CD4-positive, alpha-beta memory T cell (primary cell): ENCODE measurements at regions of chr17 and their contacts with region 1.

Region 1: DNA sequence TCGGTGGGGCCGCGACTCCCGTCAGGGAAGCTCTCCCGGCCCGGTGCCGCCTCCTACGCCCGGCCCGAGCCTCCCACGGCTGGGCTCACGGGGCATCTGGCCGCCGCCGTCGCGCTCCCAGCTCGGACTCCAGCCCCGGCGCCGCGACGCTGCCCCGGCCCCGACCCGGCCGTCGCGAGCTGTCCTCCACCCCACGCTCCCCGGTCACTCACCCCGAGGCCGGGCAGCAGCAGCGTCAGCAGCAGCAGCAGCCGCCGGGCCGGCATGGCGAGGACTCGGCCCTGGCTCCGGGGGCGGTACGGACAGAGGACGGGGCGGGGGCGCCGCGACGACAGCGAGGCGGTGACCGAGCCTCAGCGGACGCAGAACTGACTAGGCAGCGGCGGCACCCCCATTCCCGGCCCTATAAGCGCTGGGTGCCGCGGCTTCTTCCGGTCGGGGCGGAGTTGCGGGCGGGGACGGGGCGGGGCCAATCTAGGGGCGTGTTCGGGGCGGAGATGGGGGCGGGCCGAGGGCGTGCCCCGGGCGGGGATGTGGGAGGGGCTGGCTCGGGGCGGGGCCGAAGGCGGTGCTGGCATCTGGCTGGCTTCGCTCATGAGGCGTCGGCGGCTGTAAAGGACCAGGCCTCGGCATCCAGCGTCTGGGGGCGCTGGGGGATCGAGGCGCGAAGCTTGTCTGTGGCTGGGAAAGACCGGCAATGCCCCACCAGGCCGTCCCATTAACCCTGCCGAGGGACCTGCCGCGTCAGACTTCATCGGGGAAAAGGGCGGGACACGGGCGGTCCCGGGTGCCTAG is at the start of gene ERN1:
- DNase-seq: peak; percentile 90 to 92 (median 90)
- H3K4me3 ChIP-seq: peak within 1 kb of the TSS; percentile 76 to 86
- H3K4me3 Mint-ChIP-seq: peak within 1 kb of the TSS; percentile 95 to 99 (median 98)
- H3K27ac ChIP-seq: peak within 1 kb of the TSS; percentile 86
- H3K27ac Mint-ChIP-seq: peak within 1 kb of the TSS; percentile 96 to 99 (median 98)
- H3K4me1 ChIP-seq: peaks cover 56% of the 10 kb centered on the region
- H3K4me1 Mint-ChIP-seq: peaks cover 33 to 61% (median 45%) of the 10 kb centered on the region in 4 donors
- H3K27me3 ChIP-seq: no peaks in the 10 kb centered on the region
- H3K27me3 Mint-ChIP-seq: no peaks in the 10 kb centered on the region
- total RNA-seq, gene ERN1: 163 to 172 TPM

Region 2: DNA sequence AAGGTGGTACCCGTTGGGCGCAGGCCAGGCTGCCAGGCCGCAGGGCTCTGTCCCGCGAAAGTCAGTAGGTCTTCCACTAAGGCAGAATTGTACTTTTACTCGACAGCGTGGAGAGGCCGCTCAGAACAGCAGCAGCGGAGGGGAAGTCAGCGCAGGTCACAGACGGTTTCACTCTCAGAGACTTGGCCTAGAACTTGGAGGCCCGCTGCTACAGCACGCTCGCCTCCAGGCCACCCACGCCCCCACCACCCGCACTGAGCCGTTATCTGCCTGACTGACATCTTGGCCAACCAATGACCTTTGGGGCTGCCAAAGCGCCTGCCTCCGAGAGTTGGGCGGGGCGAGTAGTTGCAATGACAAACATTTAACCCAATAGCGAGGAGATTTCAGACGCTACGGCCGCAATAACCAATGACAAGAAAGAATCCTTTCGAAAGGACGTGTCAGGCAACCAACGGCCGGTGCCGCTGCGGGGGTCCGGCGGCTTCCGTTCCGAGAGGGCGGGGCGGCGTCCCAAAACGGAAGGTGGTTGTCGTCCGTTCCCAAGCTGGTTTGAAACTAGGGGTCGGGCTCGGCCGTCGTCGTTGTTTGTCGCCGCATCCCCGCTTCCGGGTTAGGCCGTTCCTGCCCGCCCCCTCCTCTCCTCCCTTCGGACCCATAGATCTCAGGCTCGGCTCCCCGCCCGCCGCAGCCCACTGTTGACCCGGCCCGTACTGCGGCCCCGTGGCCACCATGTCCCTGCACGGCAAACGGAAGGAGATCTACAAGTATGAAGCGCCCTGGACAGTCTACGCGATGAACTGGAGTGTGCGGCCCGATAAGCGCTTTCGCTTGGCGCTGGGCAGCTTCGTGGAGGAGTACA is 579.8 kb before region 1 on chr17 and contains the start of gene DCAF7:
- CTCF ChIA-PET with region 1: no interaction called
- POLR2A ChIA-PET with region 1: no interaction called
- intact Hi-C with region 1: no loop called
- DNase-seq: peak; percentile 99 to 100 (median 99)
- H3K4me3 ChIP-seq: peak within 1 kb of the TSS; percentile 90 to 91
- H3K4me3 Mint-ChIP-seq: peak within 1 kb of the TSS; percentile 92 to 99 (median 97)
- H3K27ac ChIP-seq: peak within 1 kb of the TSS; percentile 91
- H3K27ac Mint-ChIP-seq: peak within 1 kb of the TSS; percentile 90 to 98 (median 97)
- H3K4me1 ChIP-seq: peaks cover 41% of the 10 kb centered on the region
- H3K4me1 Mint-ChIP-seq: peaks cover 26 to 51% (median 36%) of the 10 kb centered on the region in 4 donors
- H3K27me3 ChIP-seq: no peaks in the 10 kb centered on the region
- H3K27me3 Mint-ChIP-seq: no peaks in the 10 kb centered on the region
- total RNA-seq, gene DCAF7: 88.1 to 93.0 TPM

Region 3: GRCh38 chr17:63919311-63919723 is 210.6 kb before region 1 on chr17:
- CTCF ChIA-PET with region 1: interaction called, 179 read pairs
- POLR2A ChIA-PET with region 1: interaction called, 15 read pairs
- intact Hi-C with region 1: loop called (anchors 1 kb)
- DNase-seq: peak; percentile 70 to 81 (median 75)
- H3K4me3 ChIP-seq: no peak overlapping the region
- H3K4me3 Mint-ChIP-seq: no peak overlapping the region
- H3K27ac ChIP-seq: no peak overlapping the region
- H3K27ac Mint-ChIP-seq: peak overlapping the region in 6 of 7 donors; percentile 38 to 87 (median 62)
- H3K4me1 ChIP-seq: peaks cover 7% of the 10 kb centered on the region
- H3K4me1 Mint-ChIP-seq: peaks cover 6% of the 10 kb centered on the region in 4 donors
- H3K27me3 ChIP-seq: no peaks in the 10 kb centered on the region
- H3K27me3 Mint-ChIP-seq: peaks cover 0 to 2% of the 10 kb centered on the region in 2 donors

Region 4: GRCh38 chr17:63998050-63998720 is 131.8 kb before region 1 on chr17 and contains the start of gene PRR29:
- CTCF ChIA-PET with region 1: interaction called, 13 read pairs
- POLR2A ChIA-PET with region 1: interaction called, 10 read pairs
- intact Hi-C with region 1: no loop called
- DNase-seq: peak; percentile 70 to 81 (median 75)
- H3K4me3 ChIP-seq: peak within 1 kb of the TSS; percentile 5 to 76
- H3K4me3 Mint-ChIP-seq: peak within 1 kb of the TSS; percentile 87 to 94 (median 88)
- H3K27ac ChIP-seq: peak within 1 kb of the TSS; percentile 39
- H3K27ac Mint-ChIP-seq: peak within 1 kb of the TSS; percentile 60 to 91 (median 87)
- H3K4me1 ChIP-seq: peaks cover 46% of the 10 kb centered on the region
- H3K4me1 Mint-ChIP-seq: peaks cover 32 to 69% (median 42%) of the 10 kb centered on the region in 4 donors
- H3K27me3 ChIP-seq: no peaks in the 10 kb centered on the region
- H3K27me3 Mint-ChIP-seq: no peaks in the 10 kb centered on the region
- total RNA-seq, gene PRR29: 0.19 to 1.0 TPM

Region 5: GRCh38 chr17:64041912-64042311 is 88.0 kb before region 1 on chr17:
- CTCF ChIA-PET with region 1: interaction called, 22 read pairs
- POLR2A ChIA-PET with region 1: interaction called, 18 read pairs
- intact Hi-C with region 1: no loop called
- DNase-seq: no peak
- H3K4me3 ChIP-seq: no peak overlapping the region
- H3K4me3 Mint-ChIP-seq: peak overlapping the region in 4 of 8 donors; percentile 7 to 50 (median 48)
- H3K27ac ChIP-seq: no peak overlapping the region
- H3K27ac Mint-ChIP-seq: peak overlapping the region in 6 of 7 donors; percentile 53 to 95 (median 80)
- H3K4me1 ChIP-seq: no peaks in the 10 kb centered on the region
- H3K4me1 Mint-ChIP-seq: peaks cover 10 to 50% (median 19%) of the 10 kb centered on the region in 4 donors
- H3K27me3 ChIP-seq: no peaks in the 10 kb centered on the region
- H3K27me3 Mint-ChIP-seq: no peaks in the 10 kb centered on the region

Region 6: GRCh38 chr17:64063766-64064224 is 66.2 kb before region 1 on chr17:
- CTCF ChIA-PET with region 1: interaction called, 153 read pairs
- POLR2A ChIA-PET with region 1: interaction called, 49 read pairs
- intact Hi-C with region 1: loop called (anchors 1 kb)
- DNase-seq: peak; percentile 39 to 74 (median 54)
- H3K4me3 ChIP-seq: no peak overlapping the region
- H3K4me3 Mint-ChIP-seq: peak overlapping the region; percentile 67 to 92 (median 88)
- H3K27ac ChIP-seq: peak overlapping the region; percentile 41
- H3K27ac Mint-ChIP-seq: peak overlapping the region; percentile 7 to 97 (median 92)
- H3K4me1 ChIP-seq: peaks cover 89% of the 10 kb centered on the region
- H3K4me1 Mint-ChIP-seq: peaks cover 48 to 100% (median 77%) of the 10 kb centered on the region in 4 donors
- H3K27me3 ChIP-seq: no peaks in the 10 kb centered on the region
- H3K27me3 Mint-ChIP-seq: no peaks in the 10 kb centered on the region

Region 7: GRCh38 chr17:64117981-64118979 is 11.7 kb before region 1 on chr17:
- CTCF ChIA-PET with region 1: interaction called, 30 read pairs
- POLR2A ChIA-PET with region 1: interaction called, 27 read pairs
- intact Hi-C with region 1: loop called (anchors 1 kb)
- DNase-seq: no peak
- H3K4me3 ChIP-seq: no peak overlapping the region
- H3K4me3 Mint-ChIP-seq: peak overlapping the region in 3 of 8 donors; percentile 21 to 63 (median 54)
- H3K27ac ChIP-seq: no peak overlapping the region
- H3K27ac Mint-ChIP-seq: peak overlapping the region in 5 of 7 donors; percentile 10 to 71 (median 50)
- H3K4me1 ChIP-seq: peaks cover 84% of the 10 kb centered on the region
- H3K4me1 Mint-ChIP-seq: peaks cover 52 to 91% (median 69%) of the 10 kb centered on the region in 4 donors
- H3K27me3 ChIP-seq: no peaks in the 10 kb centered on the region
- H3K27me3 Mint-ChIP-seq: no peaks in the 10 kb centered on the region

Region 8: GRCh38 chr17:64174686-64175456 is 44.9 kb after region 1 on chr17:
- CTCF ChIA-PET with region 1: no interaction called
- POLR2A ChIA-PET with region 1: no interaction called
- intact Hi-C with region 1: no loop called
- DNase-seq: no peak
- H3K4me3 ChIP-seq: no peak overlapping the region
- H3K4me3 Mint-ChIP-seq: no peak overlapping the region
- H3K27ac ChIP-seq: no peak overlapping the region
- H3K27ac Mint-ChIP-seq: no peak overlapping the region
- H3K4me1 ChIP-seq: no peaks in the 10 kb centered on the region
- H3K4me1 Mint-ChIP-seq: no peaks in the 10 kb centered on the region
- H3K27me3 ChIP-seq: no peaks in the 10 kb centered on the region
- H3K27me3 Mint-ChIP-seq: no peaks in the 10 kb centered on the region